ENCODE measurements at regions of chr6 and their contacts with region 1.

Region 1: DNA sequence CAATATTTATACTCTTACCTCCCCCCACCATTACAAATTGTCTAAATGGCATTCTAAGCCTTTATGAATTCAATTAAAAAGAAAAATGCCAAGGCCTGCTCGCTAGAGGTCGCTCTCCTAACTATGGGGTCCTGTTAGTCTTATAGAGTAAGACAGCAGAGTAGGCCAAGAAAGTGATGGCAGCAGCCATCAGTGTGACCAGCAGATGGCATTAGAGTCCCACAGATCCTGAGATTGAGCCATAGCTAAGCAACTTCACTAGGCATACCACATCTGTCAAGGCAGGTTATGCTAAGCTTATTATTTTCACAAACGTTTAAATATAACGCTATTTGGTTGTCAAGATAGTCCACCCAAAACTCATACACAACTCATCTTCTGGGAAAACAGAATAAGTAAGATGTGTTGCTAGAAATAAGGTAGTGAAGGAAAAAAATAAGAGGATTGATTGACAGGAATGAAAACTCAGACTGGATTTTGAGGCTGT is 57.6 kb upstream of the SCAF8 start:
- DNase-seq: peak; percentile 99
- H3K4me3 ChIP-seq: no peak overlapping the region
- H3K27ac ChIP-seq: no peak overlapping the region
- H3K4me1 ChIP-seq: no peaks in the 10 kb centered on the region
- H3K27me3 ChIP-seq: no peaks in the 10 kb centered on the region
- CTCF ChIP-seq: peak; percentile 94 to 99
- POLR2A ChIP-seq: peak; percentile 21

Region 2: GRCh38 chr6:154156135-154156896 is 519.3 kb before region 1 on chr6:
- CTCF ChIA-PET with region 1: interaction called, 40 read pairs
- POLR2A ChIA-PET with region 1: no interaction called
- dilution Hi-C with region 1: no loop called
- intact Hi-C with region 1: loop called (anchors 1 kb)
- DNase-seq: peak; percentile 46
- H3K4me3 ChIP-seq: no peak overlapping the region
- H3K27ac ChIP-seq: no peak overlapping the region
- H3K4me1 ChIP-seq: no peaks in the 10 kb centered on the region
- H3K27me3 ChIP-seq: no peaks in the 10 kb centered on the region
- CTCF ChIP-seq: peak; percentile 68 to 81
- POLR2A ChIP-seq: no peak

Region 3: GRCh38 chr6:154632119-154632518 is 43.5 kb before region 1 on chr6:
- CTCF ChIA-PET with region 1: no interaction called
- POLR2A ChIA-PET with region 1: no interaction called
- dilution Hi-C with region 1: no loop called
- intact Hi-C with region 1: no loop called
- DNase-seq: peak; percentile 92
- H3K4me3 ChIP-seq: no peak overlapping the region
- H3K27ac ChIP-seq: no peak overlapping the region
- H3K4me1 ChIP-seq: peaks cover 6% of the 10 kb centered on the region
- H3K27me3 ChIP-seq: no peaks in the 10 kb centered on the region
- CTCF ChIP-seq: no peak
- POLR2A ChIP-seq: no peak

Region 4: DNA sequence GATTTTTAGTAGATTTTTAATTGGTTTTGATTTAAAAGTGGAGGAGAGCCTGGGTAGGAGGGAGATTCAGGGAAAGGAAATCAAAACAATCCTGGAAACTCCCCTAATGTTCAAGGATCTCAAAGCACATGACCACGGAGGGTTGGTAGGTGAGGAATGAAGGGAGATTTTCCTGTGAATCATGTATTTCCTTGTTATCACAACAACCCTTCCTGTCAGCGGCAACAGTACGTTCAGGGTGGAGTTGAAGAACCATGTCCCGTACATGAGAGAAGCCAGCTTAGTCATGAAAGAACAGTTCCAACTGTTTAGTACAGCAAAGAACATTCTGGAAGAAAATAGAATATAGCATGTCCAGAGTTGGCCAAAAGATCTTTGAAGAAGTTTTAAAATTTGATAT is 21.8 kb before region 1 on chr6:
- CTCF ChIA-PET with region 1: interaction called, 10 read pairs
- POLR2A ChIA-PET with region 1: no interaction called
- dilution Hi-C with region 1: no loop called
- intact Hi-C with region 1: no loop called
- DNase-seq: peak; percentile 95
- H3K4me3 ChIP-seq: no peak overlapping the region
- H3K27ac ChIP-seq: peak overlapping the region; percentile 92
- H3K4me1 ChIP-seq: peaks cover 29% of the 10 kb centered on the region
- H3K27me3 ChIP-seq: no peaks in the 10 kb centered on the region
- CTCF ChIP-seq: no peak
- POLR2A ChIP-seq: no peak

Region 5: DNA sequence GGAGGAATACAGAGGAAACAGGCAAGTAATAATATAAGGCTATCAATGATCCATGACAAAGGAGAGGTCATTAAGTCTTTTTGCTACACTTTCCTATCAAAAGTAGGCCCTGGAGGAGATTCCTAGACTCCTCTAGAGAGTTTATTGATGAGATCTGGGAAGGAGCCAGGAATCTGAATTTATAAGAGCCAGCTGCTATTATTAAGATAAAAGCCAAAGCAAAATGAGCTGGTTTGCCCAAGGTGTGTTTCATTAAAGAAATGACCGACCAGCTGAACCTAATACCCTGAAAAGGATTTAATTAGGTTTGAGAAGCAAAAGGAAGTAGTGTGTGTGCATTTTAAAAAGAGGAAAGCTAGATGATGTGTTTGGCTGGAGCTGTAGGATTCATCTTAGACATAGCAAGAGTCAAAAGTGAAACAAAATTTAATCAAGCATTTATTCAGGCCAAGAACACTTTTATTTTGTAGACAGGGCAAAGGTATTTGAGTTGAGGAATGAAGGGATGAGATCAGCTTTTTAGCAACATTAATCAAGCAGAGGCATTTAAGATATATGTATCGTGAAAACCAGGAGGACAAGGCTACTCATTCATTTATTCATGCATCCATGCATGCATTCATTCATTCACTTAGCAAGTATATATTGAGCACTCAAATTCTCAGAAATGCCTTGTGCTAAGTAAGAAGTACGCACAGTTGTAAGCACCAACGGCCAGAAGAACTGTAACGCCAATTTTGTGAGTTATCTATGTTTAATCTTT is 14.0 kb after region 1 on chr6:
- CTCF ChIA-PET with region 1: interaction called, 31 read pairs
- POLR2A ChIA-PET with region 1: no interaction called
- dilution Hi-C with region 1: no loop called
- intact Hi-C with region 1: no loop called
- DNase-seq: no peak
- H3K4me3 ChIP-seq: no peak overlapping the region
- H3K27ac ChIP-seq: no peak overlapping the region
- H3K4me1 ChIP-seq: no peaks in the 10 kb centered on the region
- H3K27me3 ChIP-seq: no peaks in the 10 kb centered on the region
- CTCF ChIP-seq: no peak
- POLR2A ChIP-seq: no peak

Region 6: DNA sequence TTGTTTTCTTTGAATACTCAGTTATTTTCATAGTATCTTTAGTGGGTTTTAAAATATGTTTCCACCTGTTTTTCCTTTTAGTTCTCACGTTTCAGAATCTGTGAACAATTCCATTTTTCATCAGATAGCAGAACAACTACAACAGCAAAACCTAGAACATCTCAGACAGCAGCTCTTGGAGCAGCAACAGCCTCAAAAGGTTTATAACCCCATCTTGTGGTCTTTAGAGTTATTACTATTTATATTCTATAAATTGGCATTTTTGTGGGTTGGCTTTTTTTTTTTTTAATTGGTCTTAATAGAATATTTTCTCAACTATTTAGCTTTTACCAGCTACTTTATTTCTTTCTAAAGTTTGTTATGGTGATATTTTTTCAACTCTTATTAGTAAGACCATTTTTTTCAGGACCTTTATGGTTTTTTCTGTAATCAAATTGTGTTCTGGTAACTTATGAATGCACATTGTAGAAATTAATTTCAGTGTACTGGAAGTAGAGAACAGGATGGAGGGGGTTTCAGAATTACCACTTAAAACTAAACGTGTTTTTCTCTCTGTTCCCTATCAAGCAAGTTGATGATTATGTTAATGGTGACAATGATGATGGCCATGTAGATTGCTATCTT is 129.8 kb after region 1 on chr6:
- CTCF ChIA-PET with region 1: interaction called, 226 read pairs
- POLR2A ChIA-PET with region 1: interaction called, 6 read pairs
- dilution Hi-C with region 1: no loop called
- intact Hi-C with region 1: loop called (anchors 1 kb)
- DNase-seq: peak; percentile 69
- H3K4me3 ChIP-seq: no peak overlapping the region
- H3K27ac ChIP-seq: no peak overlapping the region
- H3K4me1 ChIP-seq: no peaks in the 10 kb centered on the region
- H3K27me3 ChIP-seq: no peaks in the 10 kb centered on the region
- CTCF ChIP-seq: peak in 1 of 2 donors; percentile 30
- POLR2A ChIP-seq: no peak

Region 7: DNA sequence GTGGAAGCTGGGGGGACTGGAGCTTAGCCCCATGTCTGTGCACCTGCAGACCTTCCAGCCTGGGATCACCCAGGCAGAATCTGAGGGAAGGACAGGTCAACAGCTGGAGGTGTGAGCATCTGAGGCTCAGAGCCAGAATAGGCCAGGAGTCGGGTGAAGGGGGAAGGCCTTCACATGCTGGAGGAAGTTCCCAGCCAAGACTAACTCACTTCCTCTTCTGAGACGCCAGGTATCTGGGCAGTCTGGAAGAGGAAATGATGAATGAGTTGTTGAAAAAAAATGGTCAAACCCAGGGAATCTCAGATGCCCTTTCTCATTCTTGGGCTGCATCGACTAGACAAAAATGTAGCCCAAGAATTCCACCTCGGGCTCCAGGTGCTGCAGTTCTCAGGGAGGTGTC is 245.8 kb after region 1 on chr6:
- CTCF ChIA-PET with region 1: interaction called, 16 read pairs
- POLR2A ChIA-PET with region 1: interaction called, 4 read pairs
- dilution Hi-C with region 1: no loop called
- intact Hi-C with region 1: no loop called
- DNase-seq: peak; percentile 23
- H3K4me3 ChIP-seq: no peak overlapping the region
- H3K27ac ChIP-seq: no peak overlapping the region
- H3K4me1 ChIP-seq: peaks cover 9% of the 10 kb centered on the region
- H3K27me3 ChIP-seq: no peaks in the 10 kb centered on the region
- CTCF ChIP-seq: no peak
- POLR2A ChIP-seq: no peak

Region 8: DNA sequence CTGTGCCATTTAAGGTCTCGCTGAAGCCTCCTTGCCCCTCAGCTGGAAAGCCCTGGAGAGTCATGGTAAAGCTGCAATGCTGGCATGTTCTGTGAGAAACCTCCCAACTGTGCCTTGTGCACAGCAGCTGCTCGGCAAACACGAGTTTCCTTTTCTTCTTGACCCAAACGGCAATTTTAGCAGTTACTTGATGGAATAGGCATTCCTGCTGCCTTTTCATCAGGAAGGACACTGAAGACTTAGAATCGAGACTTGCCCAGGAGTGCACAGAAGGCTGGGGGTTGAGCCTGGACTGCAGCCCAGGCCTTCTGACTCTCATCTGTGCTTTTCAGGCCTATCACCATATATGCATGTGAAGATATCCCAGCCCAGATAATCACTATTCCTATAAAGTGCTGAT is 559.4 kb after region 1 on chr6:
- CTCF ChIA-PET with region 1: no interaction called
- POLR2A ChIA-PET with region 1: no interaction called
- dilution Hi-C with region 1: no loop called
- intact Hi-C with region 1: no loop called
- DNase-seq: no peak
- H3K4me3 ChIP-seq: no peak overlapping the region
- H3K27ac ChIP-seq: no peak overlapping the region
- H3K4me1 ChIP-seq: no peaks in the 10 kb centered on the region
- H3K27me3 ChIP-seq: no peaks in the 10 kb centered on the region
- CTCF ChIP-seq: no peak
- POLR2A ChIP-seq: no peak

Region 9: GRCh38 chr6:155248008-155249001 is 572.7 kb after region 1 on chr6:
- CTCF ChIA-PET with region 1: interaction called, 14 read pairs
- POLR2A ChIA-PET with region 1: no interaction called
- dilution Hi-C with region 1: no loop called
- intact Hi-C with region 1: loop called (anchors 1 kb)
- DNase-seq: peak; percentile 75
- H3K4me3 ChIP-seq: no peak overlapping the region
- H3K27ac ChIP-seq: no peak overlapping the region
- H3K4me1 ChIP-seq: no peaks in the 10 kb centered on the region
- H3K27me3 ChIP-seq: no peaks in the 10 kb centered on the region
- CTCF ChIP-seq: peak; percentile 71 to 74
- POLR2A ChIP-seq: no peak

Region 10: DNA sequence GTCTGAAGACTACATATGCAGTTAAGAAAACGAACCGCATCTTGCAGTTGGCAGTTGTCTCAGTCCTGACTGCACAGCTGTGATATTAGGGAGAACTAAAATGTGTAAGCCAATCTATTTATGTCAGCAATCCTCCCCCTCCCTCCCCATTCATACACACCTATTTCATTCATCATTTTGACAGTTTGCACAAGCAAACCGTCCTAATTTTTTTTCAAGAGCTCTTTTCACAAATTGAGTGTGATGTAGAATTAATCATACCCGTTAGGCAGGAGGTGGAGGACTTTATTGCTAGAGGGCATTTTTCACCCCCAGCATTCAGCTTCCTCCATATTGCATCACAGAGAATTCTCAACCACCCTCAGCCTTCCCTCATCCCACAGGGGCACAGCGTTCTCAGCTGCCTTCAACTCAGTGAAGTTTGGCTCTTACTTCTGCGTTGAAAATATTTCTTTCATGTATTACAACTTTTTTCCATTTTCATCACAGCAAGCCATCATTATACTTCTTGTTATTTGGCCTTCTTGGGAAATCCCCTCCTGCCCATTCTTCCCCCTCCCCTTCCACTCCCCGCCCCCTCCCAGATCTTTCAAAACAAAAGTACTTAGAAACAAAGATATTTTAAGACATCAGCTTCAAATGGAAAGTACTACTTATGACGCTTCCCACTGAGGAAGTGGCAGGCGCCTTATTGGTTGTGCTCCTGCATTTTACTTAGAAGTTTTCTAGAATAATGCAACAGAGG is 742.5 kb after region 1 on chr6:
- CTCF ChIA-PET with region 1: no interaction called
- POLR2A ChIA-PET with region 1: no interaction called
- dilution Hi-C with region 1: no loop called
- intact Hi-C with region 1: no loop called
- DNase-seq: peak; percentile 91
- H3K4me3 ChIP-seq: no peak overlapping the region
- H3K27ac ChIP-seq: peak overlapping the region; percentile 15
- H3K4me1 ChIP-seq: peaks cover 4% of the 10 kb centered on the region
- H3K27me3 ChIP-seq: no peaks in the 10 kb centered on the region
- CTCF ChIP-seq: no peak
- POLR2A ChIP-seq: no peak